AG04450 (cell line): ENCODE measurements at regions of chr3 and their contacts with region 1.

Region 1: GRCh38 chr3:190120269-190121060 is at the start of gene P3H2:
- DNase-seq: peak; percentile 78
- H3K4me3 ChIP-seq: peak within 1 kb of the TSS; percentile 75
- H3K27ac ChIP-seq: no peak within 1 kb of the TSS
- H3K27me3 ChIP-seq: no peaks in the 10 kb centered on the region
- CTCF ChIP-seq: peak; percentile 62
- polyA plus RNA-seq, gene P3H2: 23.8 and 32.6 TPM in 2 replicates

Region 2: GRCh38 chr3:189967254-189967865 is 153.1 kb before region 1 on chr3:
- CTCF ChIA-PET with region 1: interaction called, 20 read pairs
- POLR2A ChIA-PET with region 1: no interaction called
- DNase-seq: peak; percentile 21
- H3K4me3 ChIP-seq: no peak overlapping the region
- H3K27ac ChIP-seq: no peak overlapping the region
- H3K27me3 ChIP-seq: no peaks in the 10 kb centered on the region
- CTCF ChIP-seq: peak; percentile 85

Region 3: GRCh38 chr3:190005343-190006113 is 114.9 kb before region 1 on chr3:
- CTCF ChIA-PET with region 1: interaction called, 10 read pairs
- POLR2A ChIA-PET with region 1: no interaction called
- DNase-seq: no peak
- H3K4me3 ChIP-seq: no peak overlapping the region
- H3K27ac ChIP-seq: no peak overlapping the region
- H3K27me3 ChIP-seq: no peaks in the 10 kb centered on the region
- CTCF ChIP-seq: no peak

Region 4: DNA sequence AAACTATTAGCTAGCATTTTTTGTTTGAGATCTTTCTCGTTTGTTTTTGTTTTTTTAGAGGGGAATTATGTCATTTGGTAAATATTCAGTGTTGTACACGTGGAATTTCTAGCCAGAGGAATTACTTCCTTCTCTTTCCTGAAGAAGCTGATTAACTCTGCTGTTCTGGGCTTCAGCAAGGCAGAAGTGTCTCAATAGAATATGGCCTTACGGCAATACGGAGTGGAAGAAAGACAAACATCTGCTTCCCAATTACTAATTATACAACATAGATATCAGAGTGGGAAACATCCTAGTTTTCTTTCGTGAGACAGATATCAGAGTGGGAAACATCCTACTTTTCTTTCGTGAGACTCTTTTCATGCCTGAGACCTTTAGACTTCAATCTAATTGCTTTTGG is 11.7 kb before region 1 on chr3:
- CTCF ChIA-PET with region 1: interaction called, 12 read pairs
- POLR2A ChIA-PET with region 1: no interaction called
- DNase-seq: no peak
- H3K4me3 ChIP-seq: no peak overlapping the region
- H3K27ac ChIP-seq: no peak overlapping the region
- H3K27me3 ChIP-seq: no peaks in the 10 kb centered on the region
- CTCF ChIP-seq: no peak

Region 5: DNA sequence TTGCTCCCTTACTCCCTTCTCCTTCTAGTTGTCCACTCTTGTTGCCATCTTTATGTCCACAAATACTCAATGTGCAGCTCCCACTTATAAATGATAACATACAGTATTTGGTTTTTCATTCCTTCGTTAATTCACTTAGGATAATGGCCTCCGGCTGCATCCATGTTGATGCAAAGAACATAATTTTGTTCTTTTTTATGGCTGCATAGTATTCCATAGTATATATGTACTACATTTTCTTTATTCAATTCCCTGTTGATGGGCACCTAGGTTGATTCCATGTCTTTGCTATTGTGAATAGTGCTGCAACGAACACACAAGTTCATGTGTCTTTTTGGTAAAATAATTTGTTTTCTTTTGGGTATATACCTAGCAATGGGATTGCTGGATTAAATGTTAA is 21.6 kb after region 1 on chr3:
- CTCF ChIA-PET with region 1: interaction called, 11 read pairs
- POLR2A ChIA-PET with region 1: no interaction called
- DNase-seq: no peak
- H3K4me3 ChIP-seq: no peak overlapping the region
- H3K27ac ChIP-seq: no peak overlapping the region
- H3K27me3 ChIP-seq: no peaks in the 10 kb centered on the region
- CTCF ChIP-seq: no peak

Region 6: GRCh38 chr3:190205739-190206138 is 85.3 kb after region 1 on chr3:
- CTCF ChIA-PET with region 1: interaction called, 19 read pairs
- POLR2A ChIA-PET with region 1: no interaction called
- DNase-seq: peak; percentile 27
- H3K4me3 ChIP-seq: no peak overlapping the region
- H3K27ac ChIP-seq: no peak overlapping the region
- H3K27me3 ChIP-seq: no peaks in the 10 kb centered on the region
- CTCF ChIP-seq: no peak